OCI-LY7 (cell line): ENCODE measurements at regions of chr7 and their contacts with region 1.

Region 1: GRCh38 chr7:22307816-22308545 is 49.0 kb downstream of the RAPGEF5 start:
- DNase-seq: no peak
- H3K4me3 ChIP-seq: no peak overlapping the region
- H3K27ac ChIP-seq: no peak overlapping the region
- H3K4me1 ChIP-seq: no peaks in the 10 kb centered on the region
- CTCF ChIP-seq: peak; percentile 19; the same call in 1 of the 2 replicates

Region 2: DNA sequence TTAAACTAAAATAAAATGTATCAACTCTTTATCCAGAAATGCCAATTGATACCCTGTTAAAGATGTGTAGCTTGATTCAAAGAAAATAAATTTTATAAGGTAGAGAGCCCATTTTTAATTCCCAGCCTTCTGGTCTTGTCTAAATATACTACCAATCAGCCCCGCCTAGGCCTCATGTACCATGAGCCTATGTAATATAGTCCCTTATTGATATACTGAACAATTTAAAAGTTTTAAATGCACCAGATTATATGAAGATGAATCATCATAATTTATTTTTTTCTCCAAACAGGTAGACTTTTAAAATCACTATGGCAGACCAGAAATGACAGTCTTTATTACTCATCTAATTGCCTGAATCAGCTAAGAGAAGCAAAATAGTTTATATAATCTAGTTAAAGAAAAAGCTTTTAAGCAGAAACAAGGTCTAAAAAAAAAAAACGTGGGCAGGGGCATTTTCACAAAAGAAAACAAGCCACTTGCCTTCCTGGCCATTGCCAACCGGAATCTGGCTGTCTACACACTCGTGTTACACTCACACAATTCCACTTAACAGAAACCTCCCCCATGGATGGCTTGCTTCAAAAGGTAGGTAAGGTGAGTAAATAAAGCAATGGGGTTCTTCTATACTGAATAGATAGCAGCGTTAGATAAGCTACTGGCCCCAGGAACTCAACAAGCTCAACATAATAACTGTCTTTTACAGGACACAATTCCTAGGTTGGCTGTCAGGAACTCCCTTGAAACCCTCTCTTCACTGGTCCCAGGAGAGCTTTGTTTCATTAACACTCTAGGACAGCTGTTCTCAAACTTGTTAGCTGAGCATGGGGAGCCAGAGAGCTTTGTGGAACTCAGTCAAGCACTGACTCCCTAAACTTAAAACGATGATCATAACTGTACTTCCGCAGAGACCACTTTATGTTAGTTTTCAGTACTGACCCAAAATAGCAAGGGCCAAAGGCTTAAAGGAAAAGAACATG is 11.7 kb after region 1 on chr7:
- CTCF ChIA-PET with region 1: no interaction called
- POLR2A ChIA-PET with region 1: interaction called, 25 read pairs
- intact Hi-C with region 1: no loop called
- DNase-seq: no peak
- H3K4me3 ChIP-seq: no peak overlapping the region
- H3K27ac ChIP-seq: no peak overlapping the region
- H3K4me1 ChIP-seq: peaks cover 19% of the 10 kb centered on the region
- CTCF ChIP-seq: no peak

Region 3: GRCh38 chr7:22325065-22325464 is 17.1 kb after region 1 on chr7:
- CTCF ChIA-PET with region 1: no interaction called
- POLR2A ChIA-PET with region 1: interaction called, 25 read pairs
- intact Hi-C with region 1: no loop called
- DNase-seq: peak; percentile 13
- H3K4me3 ChIP-seq: no peak overlapping the region
- H3K27ac ChIP-seq: no peak overlapping the region
- H3K4me1 ChIP-seq: peaks cover 65% of the 10 kb centered on the region
- CTCF ChIP-seq: peak; percentile 36; the same call in 1 of the 2 replicates